B cell (primary cell): ENCODE measurements at regions of chr1 and their contacts with region 1.

Region 1: DNA sequence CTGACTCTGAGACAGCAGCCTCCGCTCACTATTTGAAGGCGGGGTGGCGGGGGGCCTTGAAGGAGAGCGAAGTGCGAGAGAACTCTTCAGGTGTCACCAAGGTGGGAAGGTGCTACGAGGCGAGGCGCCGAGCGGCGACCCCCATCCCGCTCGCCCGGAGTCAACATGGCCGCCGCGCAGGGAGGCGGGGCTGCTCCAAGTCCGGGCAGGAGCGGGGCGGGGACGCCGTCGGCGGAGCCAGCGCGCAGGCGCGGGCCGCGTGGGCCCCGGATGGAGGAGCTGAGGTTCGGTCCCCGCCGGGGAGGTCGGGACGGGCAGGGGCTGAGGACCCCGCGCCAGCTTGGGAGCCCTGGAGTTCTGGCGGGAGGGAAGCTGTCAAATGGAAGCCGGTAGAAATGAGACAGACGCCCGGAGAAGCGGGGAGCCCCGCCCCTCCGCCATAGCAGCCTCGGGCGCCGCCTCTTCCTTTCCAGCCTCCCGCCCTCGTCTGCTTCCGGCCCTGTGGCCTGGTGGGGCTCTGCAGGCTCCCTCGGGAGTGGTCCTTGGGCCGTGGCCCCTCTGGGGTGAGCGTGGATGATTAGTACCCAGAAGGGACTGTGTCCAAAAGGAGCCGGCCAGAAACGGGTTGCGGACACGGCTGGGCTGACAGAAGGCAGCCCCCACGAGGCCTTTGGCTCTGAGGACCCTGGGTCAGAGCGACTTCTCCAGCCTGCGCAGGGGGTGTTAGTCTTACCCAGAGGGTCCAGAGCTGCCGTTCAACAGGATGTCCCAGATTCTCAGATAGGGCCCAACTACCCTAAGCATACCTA is at the start of gene PIGV:
- DNase-seq: peak; percentile 95
- ATAC-seq: peak; percentile 77
- H3K4me3 ChIP-seq: peak within 1 kb of the TSS; percentile 75 to 94 (median 91)
- H3K4me3 Mint-ChIP-seq: peak within 1 kb of the TSS; percentile 91
- H3K27ac ChIP-seq: peak within 1 kb of the TSS; percentile 82 to 86
- H3K27ac Mint-ChIP-seq: peak within 1 kb of the TSS; percentile 99
- H3K4me1 ChIP-seq: peaks cover 30 to 44% of the 10 kb centered on the region in 2 donors
- H3K4me1 Mint-ChIP-seq: peaks cover 48% of the 10 kb centered on the region
- H3K27me3 ChIP-seq: no peaks in the 10 kb centered on the region
- H3K27me3 Mint-ChIP-seq: no peaks in the 10 kb centered on the region
- CTCF ChIP-seq: no peak
- total RNA-seq, gene PIGV: 16.1 and 17.4 TPM in 2 replicates

Region 2: GRCh38 chr1:26111530-26112406 is 676.1 kb before region 1 on chr1 and contains the start of gene PDIK1L:
- CTCF ChIA-PET with region 1: no interaction called
- POLR2A ChIA-PET with region 1: no interaction called
- intact Hi-C with region 1: loop called (anchors 5 kb)
- DNase-seq: peak; percentile 97
- ATAC-seq: peak; percentile 83
- H3K4me3 ChIP-seq: peak within 1 kb of the TSS; percentile 65 to 95 (median 94)
- H3K4me3 Mint-ChIP-seq: peak within 1 kb of the TSS; percentile 93
- H3K27ac ChIP-seq: peak within 1 kb of the TSS; percentile 60 to 81
- H3K27ac Mint-ChIP-seq: peak within 1 kb of the TSS; percentile 94
- H3K4me1 ChIP-seq: peaks cover 12 to 17% of the 10 kb centered on the region in 2 donors
- H3K4me1 Mint-ChIP-seq: peaks cover 16% of the 10 kb centered on the region
- H3K27me3 ChIP-seq: no peaks in the 10 kb centered on the region
- H3K27me3 Mint-ChIP-seq: no peaks in the 10 kb centered on the region
- CTCF ChIP-seq: no peak
- total RNA-seq, gene PDIK1L: 15.2 and 17.3 TPM in 2 replicates

Region 3: GRCh38 chr1:26541816-26542711 is 245.8 kb before region 1 on chr1:
- CTCF ChIA-PET with region 1: interaction called, 39 read pairs
- POLR2A ChIA-PET with region 1: interaction called, 6 read pairs
- intact Hi-C with region 1: loop called (anchors 2 kb)
- DNase-seq: peak; percentile 93
- ATAC-seq: peak; percentile 62
- H3K4me3 ChIP-seq: peak overlapping the region; percentile 38 to 70 (median 51)
- H3K4me3 Mint-ChIP-seq: peak overlapping the region; percentile 90
- H3K27ac ChIP-seq: peak overlapping the region; percentile 87 to 92
- H3K27ac Mint-ChIP-seq: peak overlapping the region; percentile 99
- H3K4me1 ChIP-seq: peaks cover 87 to 95% of the 10 kb centered on the region in 2 donors
- H3K4me1 Mint-ChIP-seq: peaks cover 86% of the 10 kb centered on the region
- H3K27me3 ChIP-seq: no peaks in the 10 kb centered on the region
- H3K27me3 Mint-ChIP-seq: no peaks in the 10 kb centered on the region
- CTCF ChIP-seq: peak; percentile 78

Region 4: DNA sequence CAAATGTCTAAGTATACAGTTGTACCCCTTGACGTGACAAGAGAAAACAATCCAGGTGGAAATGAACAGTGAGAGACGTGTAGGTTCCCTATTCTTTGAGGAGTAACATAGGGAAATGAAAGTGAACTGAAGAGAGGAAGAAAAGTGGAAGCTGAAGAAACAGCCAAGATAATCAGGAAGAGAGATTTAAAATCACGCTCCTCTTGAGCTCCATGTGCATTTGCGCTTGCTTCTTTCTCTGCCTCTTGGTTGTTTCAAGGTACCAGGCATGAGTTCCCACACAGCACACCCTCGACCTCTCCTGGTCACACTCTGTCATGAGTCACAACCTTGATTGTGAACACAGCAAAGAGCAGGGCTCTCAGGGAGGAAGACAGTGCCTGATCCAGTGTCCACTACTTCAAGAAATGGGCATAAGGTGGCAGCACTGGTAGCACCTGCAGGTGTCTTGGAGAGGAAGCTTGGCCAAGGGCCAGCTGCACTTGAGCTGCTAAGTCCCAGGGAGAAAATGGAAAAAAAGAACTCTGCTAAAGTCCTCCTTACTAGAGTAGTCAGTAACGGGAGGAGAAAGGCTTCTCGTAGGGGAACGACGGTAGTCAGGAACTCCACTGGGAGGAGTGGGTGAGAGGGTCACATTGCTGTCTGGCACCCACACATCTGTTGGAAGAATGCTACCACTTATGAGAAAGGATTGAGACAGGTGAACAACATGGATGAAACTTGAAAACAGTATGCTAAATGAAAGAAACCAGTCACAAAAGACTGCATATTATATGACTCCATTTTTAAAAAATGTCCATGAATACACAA is 110.4 kb before region 1 on chr1:
- CTCF ChIA-PET with region 1: interaction called, 117 read pairs
- POLR2A ChIA-PET with region 1: interaction called, 8 read pairs
- intact Hi-C with region 1: loop called (anchors 1 kb)
- DNase-seq: peak; percentile 76
- ATAC-seq: peak; percentile 96
- H3K4me3 ChIP-seq: peak overlapping the region in 4 of 5 experiments; percentile 13 to 31 (median 24)
- H3K4me3 Mint-ChIP-seq: peak overlapping the region; percentile 77
- H3K27ac ChIP-seq: peak overlapping the region in 1 of 2 donors; percentile 12
- H3K27ac Mint-ChIP-seq: peak overlapping the region; percentile 83
- H3K4me1 ChIP-seq: peaks cover 14 to 15% of the 10 kb centered on the region in 2 donors
- H3K4me1 Mint-ChIP-seq: peaks cover 15% of the 10 kb centered on the region
- H3K27me3 ChIP-seq: no peaks in the 10 kb centered on the region
- H3K27me3 Mint-ChIP-seq: no peaks in the 10 kb centered on the region
- CTCF ChIP-seq: peak; percentile 45

Region 5: GRCh38 chr1:26744075-26744959 is 43.6 kb before region 1 on chr1:
- CTCF ChIA-PET with region 1: interaction called, 24 read pairs
- POLR2A ChIA-PET with region 1: interaction called, 3 read pairs
- intact Hi-C with region 1: loop called (anchors 1 kb)
- DNase-seq: peak; percentile 88
- ATAC-seq: peak; percentile 95
- H3K4me3 ChIP-seq: peak overlapping the region; percentile 7 to 51 (median 39)
- H3K4me3 Mint-ChIP-seq: peak overlapping the region; percentile 80
- H3K27ac ChIP-seq: peak overlapping the region; percentile 75 to 96
- H3K27ac Mint-ChIP-seq: peak overlapping the region; percentile 92
- H3K4me1 ChIP-seq: peaks cover 82 to 88% of the 10 kb centered on the region in 2 donors
- H3K4me1 Mint-ChIP-seq: peaks cover 83% of the 10 kb centered on the region
- H3K27me3 ChIP-seq: no peaks in the 10 kb centered on the region
- H3K27me3 Mint-ChIP-seq: no peaks in the 10 kb centered on the region
- CTCF ChIP-seq: no peak

Region 6: GRCh38 chr1:26820784-26821269 is 32.9 kb after region 1 on chr1:
- CTCF ChIA-PET with region 1: interaction called, 12 read pairs
- POLR2A ChIA-PET with region 1: interaction called, 4 read pairs
- intact Hi-C with region 1: no loop called
- DNase-seq: peak; percentile 91
- ATAC-seq: peak; percentile 100
- H3K4me3 ChIP-seq: peak overlapping the region in 1 of 5 experiments; percentile 8
- H3K4me3 Mint-ChIP-seq: peak overlapping the region; percentile 81
- H3K27ac ChIP-seq: peak overlapping the region in 1 of 2 donors; percentile 46
- H3K27ac Mint-ChIP-seq: peak overlapping the region; percentile 87
- H3K4me1 ChIP-seq: peaks cover 21 to 29% of the 10 kb centered on the region in 2 donors
- H3K4me1 Mint-ChIP-seq: peaks cover 21% of the 10 kb centered on the region
- H3K27me3 ChIP-seq: peaks cover 0 to 21% (median 5%) of the 10 kb centered on the region in 4 experiments
- H3K27me3 Mint-ChIP-seq: peaks cover 10% of the 10 kb centered on the region
- CTCF ChIP-seq: peak; percentile 73